Activated naive CD4-positive, alpha-beta T cell treated with anti-CD3 and anti-CD28 coated beads for 36 hours (primary cell): ENCODE measurements at regions of chr10 and their contacts with region 1.

Region 1: DNA sequence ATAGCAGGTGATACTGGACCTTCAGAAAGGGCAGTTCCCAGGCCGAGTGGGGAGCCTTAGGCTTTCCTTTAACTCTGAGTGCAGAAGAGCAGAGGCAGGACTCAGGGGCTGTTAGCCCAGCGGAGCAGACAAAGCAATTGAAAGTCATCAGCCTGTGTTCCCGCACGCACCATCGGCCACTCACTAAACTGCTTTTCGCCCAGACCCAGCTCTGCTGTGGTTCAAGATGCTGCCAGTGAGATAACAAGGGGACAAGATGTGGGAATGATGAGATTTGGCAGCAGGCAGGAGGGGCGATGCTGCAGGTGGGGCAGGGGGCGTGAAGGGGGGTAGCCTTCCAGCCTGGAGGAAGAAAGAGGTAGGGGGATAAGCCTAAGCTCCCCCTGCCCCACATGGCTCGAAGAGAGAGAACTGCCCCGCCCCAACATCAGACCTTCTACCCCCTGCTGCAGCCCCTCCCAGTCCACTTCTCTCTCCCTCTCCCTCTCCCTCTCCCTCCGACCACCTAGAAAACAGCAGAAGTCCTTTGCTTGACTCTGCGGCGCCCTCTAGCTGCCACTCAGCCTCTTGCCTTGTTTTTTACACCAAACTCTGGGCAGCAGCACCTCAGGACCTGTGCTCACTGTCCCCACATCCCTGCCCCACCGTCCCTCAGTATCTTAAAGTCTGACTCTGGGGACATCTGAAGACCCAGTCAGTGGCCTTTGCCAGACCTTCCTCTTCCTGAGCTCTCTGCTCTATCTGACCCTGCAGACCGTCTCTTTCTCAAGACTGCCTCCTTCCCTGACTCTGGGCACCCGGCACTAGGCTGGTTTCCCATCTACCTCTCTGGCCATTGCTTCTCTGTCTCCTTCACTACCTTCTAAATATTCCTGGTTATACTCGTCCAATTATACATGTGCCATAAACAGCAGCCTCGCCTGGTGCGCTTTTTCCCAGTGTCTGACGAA is 110.5 kb downstream of the C10orf105 start:
- DNase-seq: peak; percentile 84
- H3K4me3 Mint-ChIP-seq: no peak overlapping the region
- H3K27ac Mint-ChIP-seq: no peak overlapping the region
- H3K4me1 Mint-ChIP-seq: no peaks in the 10 kb centered on the region
- H3K27me3 Mint-ChIP-seq: no peaks in the 10 kb centered on the region

Region 2: DNA sequence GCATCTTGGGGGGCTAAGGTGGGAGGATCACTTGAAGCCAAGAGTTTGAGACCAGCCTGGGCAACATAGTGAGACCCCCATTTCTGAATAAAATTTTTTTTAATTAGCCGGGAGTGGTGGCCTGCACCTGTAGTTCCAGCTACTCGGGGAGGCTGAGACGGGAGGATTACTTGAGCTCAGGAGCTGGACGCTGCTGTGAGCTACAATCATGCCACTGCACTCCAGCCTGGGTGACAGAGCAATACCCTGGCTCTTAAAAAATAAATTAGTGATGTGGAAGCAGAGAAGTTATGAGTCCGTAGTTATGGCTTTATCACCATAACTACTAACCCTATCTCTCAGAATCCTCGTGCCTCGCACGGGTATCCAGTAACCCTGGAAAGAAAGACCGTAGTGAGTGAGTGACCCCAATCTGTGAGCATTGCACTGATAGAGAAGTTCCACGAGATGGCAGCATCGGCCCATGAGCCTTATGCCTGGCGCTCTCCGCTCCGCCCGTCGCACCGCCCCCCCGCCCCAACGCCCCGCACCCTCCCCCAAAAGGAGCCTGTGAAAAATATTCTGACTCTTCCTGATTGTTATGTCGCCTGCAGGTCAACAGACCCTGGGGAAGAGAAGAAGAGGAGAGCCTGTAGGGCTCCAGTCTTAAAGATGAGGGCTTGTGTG is 294.9 kb before region 1 on chr10:
- CTCF ChIA-PET with region 1: interaction called, 3 read pairs
- intact Hi-C with region 1: loop called (anchors 1 kb)
- DNase-seq: peak; percentile 62
- H3K4me3 Mint-ChIP-seq: no peak overlapping the region
- H3K27ac Mint-ChIP-seq: no peak overlapping the region
- H3K4me1 Mint-ChIP-seq: peaks cover 18% of the 10 kb centered on the region
- H3K27me3 Mint-ChIP-seq: peaks cover 5% of the 10 kb centered on the region

Region 3: DNA sequence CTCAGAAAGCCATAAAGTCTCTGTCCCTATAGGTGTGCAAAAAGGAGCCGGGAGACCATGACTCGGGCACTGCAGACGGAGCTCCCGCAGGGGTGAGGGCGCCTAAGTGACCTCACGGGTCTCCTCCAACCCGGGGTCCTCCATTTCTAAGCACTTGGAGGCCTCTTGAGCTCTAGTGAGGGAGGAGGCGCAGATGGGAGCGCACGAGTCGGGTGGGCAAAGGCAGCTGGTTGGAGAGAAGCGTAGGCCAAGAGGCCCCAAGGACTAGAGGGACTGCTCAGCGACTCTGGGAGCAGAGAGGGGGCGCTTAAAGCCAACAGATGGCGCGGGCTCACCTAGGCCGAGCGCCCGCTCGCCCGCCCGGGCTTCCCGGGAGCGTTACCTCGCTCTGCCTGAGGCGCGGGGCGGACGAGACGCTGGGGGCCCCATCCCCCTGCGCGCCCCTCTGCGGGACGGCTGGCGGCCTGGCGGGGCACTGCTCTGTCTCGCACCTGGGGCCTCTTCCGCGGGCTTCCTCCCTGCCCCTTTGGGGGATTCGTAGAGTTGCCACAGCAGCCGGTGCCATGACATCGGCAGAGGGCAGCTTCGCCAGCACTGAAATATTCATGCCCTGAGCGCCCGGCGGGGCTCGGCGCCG is 212.9 kb before region 1 on chr10:
- CTCF ChIA-PET with region 1: interaction called, 5 read pairs
- intact Hi-C with region 1: loop called (anchors 1 kb)
- DNase-seq: peak; percentile 62
- H3K4me3 Mint-ChIP-seq: peak overlapping the region; percentile 45
- H3K27ac Mint-ChIP-seq: no peak overlapping the region
- H3K4me1 Mint-ChIP-seq: peaks cover 2% of the 10 kb centered on the region
- H3K27me3 Mint-ChIP-seq: peaks cover 58% of the 10 kb centered on the region